Activated CD4-positive, alpha-beta T cell treated with anti-CD3 and anti-CD28 coated beads for 36 hours (primary cell): ENCODE measurements at regions of chr9 and their contacts with region 1.

Region 1: GRCh38 chr9:121976751-121977150 is 116.4 kb downstream of the TTLL11 start:
- DNase-seq: no peak
- ATAC-seq: peak; percentile 63
- H3K4me3 Mint-ChIP-seq: no peak overlapping the region
- H3K27ac Mint-ChIP-seq: no peak overlapping the region
- H3K4me1 Mint-ChIP-seq: no peaks in the 10 kb centered on the region
- H3K27me3 Mint-ChIP-seq: no peaks in the 10 kb centered on the region

Region 2: GRCh38 chr9:121876658-121877271 is 100.0 kb before region 1 on chr9:
- CTCF ChIA-PET with region 1: no interaction called
- POLR2A ChIA-PET with region 1: no interaction called
- intact Hi-C with region 1: no loop called
- DNase-seq: no peak
- ATAC-seq: no peak
- H3K4me3 Mint-ChIP-seq: no peak overlapping the region
- H3K27ac Mint-ChIP-seq: no peak overlapping the region
- H3K4me1 Mint-ChIP-seq: no peaks in the 10 kb centered on the region
- H3K27me3 Mint-ChIP-seq: no peaks in the 10 kb centered on the region

Region 3: DNA sequence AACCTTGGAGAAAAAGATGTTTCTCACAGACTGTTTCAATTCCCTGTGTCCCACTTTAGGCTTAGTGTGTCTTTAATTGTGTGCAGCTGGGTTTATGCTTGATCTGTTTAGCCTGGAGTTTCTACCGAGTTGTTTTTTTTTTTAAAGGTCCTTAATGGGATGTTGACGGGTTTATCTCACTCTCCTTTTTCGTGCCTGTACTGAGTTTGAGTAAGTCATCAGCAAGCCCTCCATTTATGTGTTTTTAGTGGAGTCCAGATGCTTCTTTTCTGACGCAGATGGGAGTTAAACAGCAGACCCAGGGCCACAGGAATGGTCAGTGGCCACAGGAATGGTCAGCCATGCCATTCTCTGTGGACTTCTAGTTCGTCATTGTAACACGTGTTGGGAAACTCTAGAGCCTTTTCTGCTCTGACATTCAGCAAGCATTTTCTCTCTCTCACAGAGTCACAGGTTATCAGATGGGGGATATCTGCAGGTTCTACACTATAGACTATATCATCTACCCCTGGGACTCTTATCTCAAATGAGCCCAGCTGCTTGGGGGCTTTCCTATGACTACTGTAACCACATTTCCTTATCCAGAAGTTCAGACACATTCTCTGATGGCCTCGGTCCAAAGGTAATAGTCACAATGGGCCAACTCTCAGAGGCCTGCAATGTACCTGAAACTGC is 74.2 kb before region 1 on chr9:
- CTCF ChIA-PET with region 1: no interaction called
- POLR2A ChIA-PET with region 1: no interaction called
- intact Hi-C with region 1: loop called in 1 of 2 experiments (anchors 5 kb)
- DNase-seq: no peak
- ATAC-seq: no peak
- H3K4me3 Mint-ChIP-seq: no peak overlapping the region
- H3K27ac Mint-ChIP-seq: no peak overlapping the region
- H3K4me1 Mint-ChIP-seq: no peaks in the 10 kb centered on the region
- H3K27me3 Mint-ChIP-seq: no peaks in the 10 kb centered on the region

Region 4: DNA sequence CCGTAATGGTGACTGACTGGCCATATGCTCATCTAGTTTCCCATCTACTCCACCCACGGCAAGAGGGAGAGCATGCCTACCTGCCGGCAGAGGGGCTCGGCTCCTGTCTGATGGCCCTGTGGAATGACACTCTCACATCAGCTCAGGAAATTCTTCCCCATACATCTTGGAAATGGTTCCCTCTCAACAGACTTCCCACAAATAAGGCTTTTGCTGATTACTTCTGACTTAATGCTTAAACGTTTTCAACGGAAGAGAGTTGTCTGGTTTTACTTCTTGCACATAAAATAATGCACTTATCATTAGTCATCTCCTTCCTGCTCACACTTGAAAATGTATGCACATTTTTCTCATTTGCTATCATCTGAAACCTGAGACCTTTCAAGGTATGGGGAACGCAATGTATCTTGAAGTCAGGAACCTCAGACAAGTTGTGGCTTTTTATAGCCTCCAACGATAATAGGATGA is 13.2 kb before region 1 on chr9:
- CTCF ChIA-PET with region 1: no interaction called
- POLR2A ChIA-PET with region 1: no interaction called
- intact Hi-C with region 1: no loop called
- DNase-seq: no peak
- ATAC-seq: no peak
- H3K4me3 Mint-ChIP-seq: no peak overlapping the region
- H3K27ac Mint-ChIP-seq: no peak overlapping the region
- H3K4me1 Mint-ChIP-seq: peaks cover 3% of the 10 kb centered on the region
- H3K27me3 Mint-ChIP-seq: no peaks in the 10 kb centered on the region

Region 5: GRCh38 chr9:121990600-121991306 is 14.0 kb after region 1 on chr9:
- CTCF ChIA-PET with region 1: no interaction called
- POLR2A ChIA-PET with region 1: no interaction called
- intact Hi-C with region 1: no loop called
- DNase-seq: no peak
- ATAC-seq: no peak
- H3K4me3 Mint-ChIP-seq: no peak overlapping the region
- H3K27ac Mint-ChIP-seq: no peak overlapping the region
- H3K4me1 Mint-ChIP-seq: no peaks in the 10 kb centered on the region
- H3K27me3 Mint-ChIP-seq: no peaks in the 10 kb centered on the region

Region 6: GRCh38 chr9:122051351-122052321 is 74.9 kb after region 1 on chr9:
- CTCF ChIA-PET with region 1: no interaction called
- POLR2A ChIA-PET with region 1: interaction called, 13 read pairs
- intact Hi-C with region 1: no loop called
- DNase-seq: peak; percentile 77
- ATAC-seq: peak; percentile 86
- H3K4me3 Mint-ChIP-seq: no peak overlapping the region
- H3K27ac Mint-ChIP-seq: no peak overlapping the region
- H3K4me1 Mint-ChIP-seq: peaks cover 22% of the 10 kb centered on the region
- H3K27me3 Mint-ChIP-seq: no peaks in the 10 kb centered on the region

Region 7: DNA sequence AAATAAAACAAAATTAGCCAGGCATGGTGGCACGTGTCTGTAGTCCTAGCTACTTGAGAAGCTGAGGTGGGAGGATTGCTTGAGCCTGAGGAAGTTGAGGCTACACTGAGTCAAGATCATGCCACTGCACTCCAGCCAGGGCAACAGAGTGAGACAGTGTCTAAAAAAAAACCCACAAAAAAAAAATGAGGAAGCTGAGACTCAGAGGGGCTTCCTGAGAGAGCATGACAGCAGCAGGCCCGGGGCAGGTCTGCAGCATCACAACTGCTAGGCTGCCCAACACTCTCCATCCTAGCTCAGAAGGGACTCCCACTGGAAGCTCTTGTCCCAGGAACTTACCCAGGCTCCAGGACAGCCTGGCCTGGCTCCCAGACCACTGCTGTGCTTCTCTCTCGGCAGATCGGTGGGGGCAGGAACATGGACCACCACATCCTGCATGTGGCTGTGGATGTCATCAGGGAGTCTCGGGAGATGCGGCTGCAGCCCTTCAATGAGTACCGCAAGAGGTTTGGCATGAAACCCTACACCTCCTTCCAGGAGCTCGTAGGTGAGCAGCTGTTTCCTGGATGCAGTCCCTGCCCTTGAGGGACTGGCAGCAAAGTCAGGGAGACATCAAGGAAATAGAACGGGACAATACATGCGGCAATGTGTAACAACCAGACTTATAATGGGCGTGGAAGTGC is 413.2 kb after region 1 on chr9:
- CTCF ChIA-PET with region 1: no interaction called
- POLR2A ChIA-PET with region 1: no interaction called
- intact Hi-C with region 1: no loop called
- DNase-seq: no peak
- ATAC-seq: no peak
- H3K4me3 Mint-ChIP-seq: no peak overlapping the region
- H3K27ac Mint-ChIP-seq: no peak overlapping the region
- H3K4me1 Mint-ChIP-seq: no peaks in the 10 kb centered on the region
- H3K27me3 Mint-ChIP-seq: peaks cover 13% of the 10 kb centered on the region